ENCODE measurements at regions of chr2 and their contacts with region 1.

Region 1: DNA sequence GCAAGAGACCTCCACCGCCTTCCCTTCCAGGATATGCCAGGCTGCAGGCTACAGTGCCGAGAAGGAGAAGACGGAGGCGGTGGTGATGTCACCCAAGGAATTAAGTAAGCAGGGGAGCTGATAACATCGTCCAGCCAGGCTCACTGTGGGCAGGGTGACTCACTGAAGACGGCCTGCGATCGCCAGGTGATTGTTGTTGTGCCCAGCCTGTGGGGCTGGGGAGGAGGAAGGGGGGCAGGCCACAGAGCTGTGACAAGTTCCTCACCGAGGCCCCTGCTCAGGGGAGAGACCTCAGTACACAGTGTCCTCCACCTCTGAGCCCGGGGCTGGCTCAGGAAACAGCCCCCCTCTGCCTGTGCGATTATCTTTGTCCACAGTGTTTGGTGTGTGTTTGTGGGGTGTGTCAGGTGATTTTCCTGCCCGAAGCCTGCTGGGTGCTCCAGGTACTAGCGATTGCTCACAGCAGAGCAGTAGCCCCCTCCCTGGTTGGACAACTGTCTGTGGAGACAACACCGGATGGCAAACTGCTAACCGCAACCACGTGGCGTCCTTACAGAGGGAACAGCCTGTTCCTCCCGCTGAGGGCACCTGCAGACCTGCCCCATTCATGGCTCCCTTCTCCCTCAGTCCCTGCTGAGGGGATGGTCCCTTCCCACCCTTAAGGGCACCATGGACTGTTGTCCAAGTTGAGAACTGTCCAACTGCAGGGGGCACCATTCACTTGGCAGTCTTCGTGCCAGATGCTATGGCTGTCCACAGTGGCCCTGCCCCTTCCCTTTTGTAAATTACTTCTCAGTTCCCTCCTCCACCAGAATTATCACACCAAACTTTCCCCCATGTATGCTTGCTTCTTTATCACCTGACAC is 95.1 kb downstream of the ZFP36L2 start:
- DNase-seq: peak; percentile 65 to 97 (median 80)
- ATAC-seq: peak; percentile 42
- H3K4me3 ChIP-seq: peak overlapping the region; percentile 21
- H3K4me3 Mint-ChIP-seq: peak overlapping the region; percentile 46
- H3K27ac ChIP-seq: peak overlapping the region; percentile 83 to 96
- H3K27ac Mint-ChIP-seq: peak overlapping the region; percentile 99
- H3K4me1 ChIP-seq: peaks cover 97% of the 10 kb centered on the region
- H3K4me1 Mint-ChIP-seq: peaks cover 89% of the 10 kb centered on the region
- H3K27me3 ChIP-seq: no peaks in the 10 kb centered on the region
- H3K27me3 Mint-ChIP-seq: no peaks in the 10 kb centered on the region
- CTCF ChIP-seq: peak; percentile 51

Region 2: DNA sequence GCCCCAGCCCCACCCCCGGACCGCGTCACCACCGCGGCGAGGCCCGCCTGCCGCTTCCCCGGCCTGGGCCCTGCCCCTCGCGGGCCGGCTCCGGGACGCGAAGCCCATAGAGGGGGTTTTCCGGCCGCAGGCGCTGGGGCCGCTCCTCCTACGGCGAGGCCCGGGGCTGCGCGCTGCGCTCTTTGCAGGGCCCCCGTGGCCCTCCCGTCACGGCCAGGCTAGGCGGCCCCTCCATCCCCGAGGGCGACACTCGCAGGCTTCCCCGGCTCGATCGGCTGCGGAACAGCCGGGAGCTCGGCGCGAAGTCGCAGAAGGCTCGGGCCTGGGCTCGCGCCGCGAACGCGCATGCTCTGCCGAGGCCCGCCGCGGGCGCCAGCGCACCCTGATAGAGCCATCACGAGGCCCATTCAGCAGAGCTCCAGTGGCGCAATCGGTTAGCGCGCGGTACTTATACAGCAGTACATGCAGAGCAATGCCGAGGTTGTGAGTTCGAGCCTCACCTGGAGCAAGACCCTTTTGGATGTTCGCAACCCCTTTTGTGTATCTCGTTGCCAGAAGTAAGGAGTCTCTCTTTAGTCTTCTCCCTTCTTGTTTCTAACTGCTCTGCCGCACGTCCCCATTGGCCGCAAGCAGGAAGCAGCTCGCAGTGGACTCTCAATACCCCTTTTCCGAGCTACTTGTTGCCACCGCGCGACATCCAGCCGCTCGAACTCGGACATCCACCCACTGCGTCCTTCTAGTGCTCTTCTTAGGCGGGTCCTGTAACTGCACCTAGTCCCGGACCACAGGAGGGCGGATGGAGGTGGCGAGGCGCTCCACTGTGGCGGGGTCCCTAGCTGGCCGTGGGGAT is 320.9 kb before region 1 on chr2:
- CTCF ChIA-PET with region 1: no interaction called
- POLR2A ChIA-PET with region 1: interaction called, 10 read pairs
- intact Hi-C with region 1: loop called in 1 of 2 experiments (anchors 5 kb)
- DNase-seq: peak; percentile 92 to 99 (median 96)
- ATAC-seq: peak; percentile 78
- H3K4me3 ChIP-seq: peak overlapping the region; percentile 89
- H3K4me3 Mint-ChIP-seq: peak overlapping the region; percentile 98
- H3K27ac ChIP-seq: peak overlapping the region; percentile 93
- H3K27ac Mint-ChIP-seq: peak overlapping the region; percentile 100
- H3K4me1 ChIP-seq: peaks cover 27% of the 10 kb centered on the region
- H3K4me1 Mint-ChIP-seq: peaks cover 30% of the 10 kb centered on the region
- H3K27me3 ChIP-seq: no peaks in the 10 kb centered on the region
- H3K27me3 Mint-ChIP-seq: peaks cover 7% of the 10 kb centered on the region
- CTCF ChIP-seq: no peak

Region 3: DNA sequence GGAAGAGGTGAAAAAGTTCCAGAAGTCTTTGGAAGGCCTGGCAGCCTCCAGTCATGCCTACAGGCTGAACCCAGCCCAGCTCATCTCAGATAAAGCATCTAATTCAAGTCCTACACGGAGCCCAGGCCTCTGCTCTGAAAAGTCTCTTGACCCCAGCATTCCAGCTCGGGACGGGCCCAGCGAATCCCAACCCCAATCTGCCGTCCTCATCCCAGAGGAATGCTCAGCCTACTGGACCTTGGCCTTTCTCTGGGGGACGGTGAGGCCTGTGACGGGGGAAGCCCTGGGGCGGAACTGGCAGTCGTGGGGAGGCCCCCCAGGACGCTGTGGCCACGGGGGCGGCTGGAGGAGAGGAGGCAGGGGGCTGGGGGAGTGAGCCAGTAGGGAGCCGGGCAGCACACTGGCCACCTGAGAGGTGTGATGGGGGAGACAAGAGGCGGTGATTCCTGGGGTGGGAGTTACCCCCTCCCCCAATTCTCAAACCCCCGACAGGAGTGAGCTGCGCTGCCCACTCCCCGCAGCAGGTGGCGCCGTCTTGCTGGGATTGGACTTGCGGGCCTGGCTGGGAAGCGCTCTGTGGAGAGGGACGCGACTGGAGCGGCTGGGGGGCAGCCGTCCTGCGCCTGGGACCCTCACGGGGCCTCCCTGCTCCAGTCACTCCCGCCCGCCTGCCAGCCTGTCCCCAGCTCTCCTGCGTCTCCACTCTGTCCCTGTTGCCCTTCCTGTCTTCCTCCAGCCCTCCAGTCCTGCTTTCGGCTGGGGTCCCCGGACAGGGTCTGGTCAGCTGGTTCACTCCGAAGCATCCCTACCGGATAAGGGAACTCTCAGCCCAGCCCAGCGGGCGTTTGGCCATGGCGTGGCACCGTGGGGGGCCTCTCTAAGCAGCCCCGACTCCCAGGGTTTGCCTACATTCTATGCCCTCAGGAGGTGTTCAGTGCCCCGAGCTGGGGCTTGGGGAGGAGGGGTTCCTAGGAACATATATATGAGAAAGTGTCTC is 156.2 kb before region 1 on chr2:
- CTCF ChIA-PET with region 1: interaction called, 4 read pairs
- POLR2A ChIA-PET with region 1: no interaction called
- intact Hi-C with region 1: loop called in 1 of 2 experiments (anchors 10 kb)
- DNase-seq: peak; percentile 13 to 71 (median 46)
- ATAC-seq: peak; percentile 46
- H3K4me3 ChIP-seq: no peak overlapping the region
- H3K4me3 Mint-ChIP-seq: no peak overlapping the region
- H3K27ac ChIP-seq: no peak overlapping the region
- H3K27ac Mint-ChIP-seq: no peak overlapping the region
- H3K4me1 ChIP-seq: peaks cover 9% of the 10 kb centered on the region
- H3K4me1 Mint-ChIP-seq: peaks cover 9% of the 10 kb centered on the region
- H3K27me3 ChIP-seq: no peaks in the 10 kb centered on the region
- H3K27me3 Mint-ChIP-seq: no peaks in the 10 kb centered on the region
- CTCF ChIP-seq: peak; percentile 64

Region 4: DNA sequence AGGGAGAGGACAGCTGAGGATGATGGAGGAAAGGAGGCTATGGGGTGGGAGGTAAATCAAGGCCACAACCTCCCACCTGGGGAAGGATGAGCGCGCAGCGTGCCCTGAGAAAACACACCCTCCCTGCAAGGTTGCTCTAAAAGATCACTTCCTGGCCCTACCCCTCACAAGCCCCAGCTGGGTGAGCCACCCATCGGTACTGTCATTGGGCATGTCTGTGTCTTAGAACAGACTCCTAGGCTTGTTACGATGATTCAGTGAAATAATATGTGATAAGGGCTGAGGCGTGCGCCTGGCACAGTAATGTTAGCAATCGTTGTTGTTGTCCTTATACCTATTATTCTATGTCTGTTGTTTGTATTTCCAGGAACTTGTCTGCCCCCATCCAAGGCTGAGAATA is 79.9 kb before region 1 on chr2:
- CTCF ChIA-PET with region 1: no interaction called
- POLR2A ChIA-PET with region 1: no interaction called
- intact Hi-C with region 1: no loop called
- DNase-seq: peak in 11 of 14 experiments; percentile 26 to 67 (median 39)
- ATAC-seq: peak; percentile 96
- H3K4me3 ChIP-seq: no peak overlapping the region
- H3K4me3 Mint-ChIP-seq: no peak overlapping the region
- H3K27ac ChIP-seq: no peak overlapping the region
- H3K27ac Mint-ChIP-seq: peak overlapping the region; percentile 69
- H3K4me1 ChIP-seq: peaks cover 23% of the 10 kb centered on the region
- H3K4me1 Mint-ChIP-seq: peaks cover 34% of the 10 kb centered on the region
- H3K27me3 ChIP-seq: no peaks in the 10 kb centered on the region
- H3K27me3 Mint-ChIP-seq: no peaks in the 10 kb centered on the region
- CTCF ChIP-seq: no peak

Region 5: DNA sequence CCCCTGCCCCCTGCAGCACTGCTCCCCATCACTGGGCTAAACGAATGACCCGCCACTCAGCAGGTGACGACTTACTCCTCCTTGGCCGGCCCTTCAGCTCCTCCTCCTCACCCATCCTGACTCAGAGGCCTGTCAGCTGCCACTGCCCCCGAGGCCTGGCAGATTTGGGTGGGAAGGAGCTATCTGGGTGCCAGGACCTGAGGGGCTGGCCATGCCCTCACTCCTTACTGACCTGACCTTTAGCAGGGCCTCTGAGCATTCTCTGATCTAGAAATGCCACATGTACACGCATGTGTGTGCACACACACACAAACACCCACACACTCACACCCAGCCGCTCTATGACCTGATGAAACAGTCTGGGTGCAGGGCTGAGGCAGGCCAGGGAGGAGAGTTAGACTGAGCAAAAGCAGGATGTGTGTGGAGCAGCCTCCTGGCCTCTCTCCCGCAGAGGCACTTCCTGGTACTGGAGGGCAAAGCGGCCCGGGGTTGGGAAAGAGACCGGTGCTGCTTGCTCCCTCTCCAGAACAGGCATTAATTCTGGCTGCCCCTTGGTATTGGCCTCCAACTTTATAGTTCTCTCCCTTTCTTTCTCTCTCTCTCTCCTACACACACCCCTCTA is 27.1 kb after region 1 on chr2:
- CTCF ChIA-PET with region 1: interaction called, 5 read pairs
- POLR2A ChIA-PET with region 1: interaction called, 53 read pairs
- intact Hi-C with region 1: loop called in 1 of 2 experiments (anchors 2 kb)
- DNase-seq: peak in 11 of 14 experiments; percentile 43 to 85 (median 66)
- ATAC-seq: peak; percentile 67
- H3K4me3 ChIP-seq: peak overlapping the region; percentile 30
- H3K4me3 Mint-ChIP-seq: peak overlapping the region; percentile 77
- H3K27ac ChIP-seq: peak overlapping the region; percentile 91 to 94
- H3K27ac Mint-ChIP-seq: peak overlapping the region; percentile 98
- H3K4me1 ChIP-seq: peaks cover 89% of the 10 kb centered on the region
- H3K4me1 Mint-ChIP-seq: peaks cover 89% of the 10 kb centered on the region
- H3K27me3 ChIP-seq: no peaks in the 10 kb centered on the region
- H3K27me3 Mint-ChIP-seq: no peaks in the 10 kb centered on the region
- CTCF ChIP-seq: no peak

Region 6: GRCh38 chr2:43194121-43194869 is 63.0 kb after region 1 on chr2:
- CTCF ChIA-PET with region 1: interaction called, 6 read pairs
- POLR2A ChIA-PET with region 1: interaction called, 94 read pairs
- intact Hi-C with region 1: loop called (anchors 1 to 2 kb)
- DNase-seq: peak in 1 of 14 experiments; percentile 35
- ATAC-seq: no peak
- H3K4me3 ChIP-seq: peak overlapping the region; percentile 57
- H3K4me3 Mint-ChIP-seq: peak overlapping the region; percentile 82
- H3K27ac ChIP-seq: peak overlapping the region; percentile 88 to 97
- H3K27ac Mint-ChIP-seq: peak overlapping the region; percentile 94
- H3K4me1 ChIP-seq: peaks cover 88% of the 10 kb centered on the region
- H3K4me1 Mint-ChIP-seq: peaks cover 55% of the 10 kb centered on the region
- H3K27me3 ChIP-seq: no peaks in the 10 kb centered on the region
- H3K27me3 Mint-ChIP-seq: no peaks in the 10 kb centered on the region
- CTCF ChIP-seq: no peak

Region 7: GRCh38 chr2:43484323-43484930 is 353.2 kb after region 1 on chr2:
- CTCF ChIA-PET with region 1: interaction called, 15 read pairs
- POLR2A ChIA-PET with region 1: interaction called, 3 read pairs
- intact Hi-C with region 1: loop called (anchors 2 to 5 kb)
- DNase-seq: peak in 3 of 14 experiments; percentile 68 to 79 (median 76)
- ATAC-seq: no peak
- H3K4me3 ChIP-seq: no peak overlapping the region
- H3K4me3 Mint-ChIP-seq: no peak overlapping the region
- H3K27ac ChIP-seq: no peak overlapping the region
- H3K27ac Mint-ChIP-seq: no peak overlapping the region
- H3K4me1 ChIP-seq: no peaks in the 10 kb centered on the region
- H3K4me1 Mint-ChIP-seq: no peaks in the 10 kb centered on the region
- H3K27me3 ChIP-seq: no peaks in the 10 kb centered on the region
- H3K27me3 Mint-ChIP-seq: no peaks in the 10 kb centered on the region
- CTCF ChIP-seq: peak; percentile 75